A549 (cell line): ENCODE measurements at regions of chr3 and their contacts with region 1.

Region 1: DNA sequence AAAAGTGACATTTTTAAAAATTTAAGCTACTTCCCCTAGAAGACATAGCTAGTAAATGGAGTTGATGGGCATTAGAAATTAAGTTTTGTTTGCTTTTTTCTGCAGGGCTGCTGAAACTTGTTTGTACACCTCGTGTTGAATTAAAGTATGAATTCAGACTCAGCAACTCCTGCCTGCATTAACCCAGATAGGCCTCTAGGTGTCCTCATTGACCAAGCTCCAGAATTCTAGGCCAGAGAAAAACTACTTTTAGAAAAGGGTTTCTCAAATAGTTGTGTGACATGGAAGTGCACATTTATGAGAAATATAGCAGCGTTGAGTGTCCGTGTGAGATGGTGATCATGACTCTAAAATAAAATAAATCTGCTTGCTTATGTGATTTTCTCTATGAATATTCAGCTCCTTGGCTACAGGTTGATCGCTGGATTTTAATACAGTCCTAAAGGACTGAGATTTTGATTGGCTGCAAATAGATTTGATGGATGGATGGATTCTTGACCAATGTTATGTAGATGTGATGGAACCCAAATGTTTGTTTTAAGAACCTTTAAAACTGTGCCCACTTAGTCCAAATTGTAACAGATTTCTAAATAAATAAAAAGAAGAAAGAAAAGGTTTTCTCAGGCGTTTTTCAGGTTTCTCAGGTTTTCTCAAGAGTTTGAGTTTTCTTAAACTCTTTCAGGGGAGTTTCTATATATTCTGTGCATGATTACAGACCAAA is 39.4 kb upstream of the LMOD3 start:
- DNase-seq: peak; percentile 41 to 42
- ATAC-seq: peak in 1 of 2 experiments; percentile 60; a peak in 4 of 6 replicates
- H3K4me3 ChIP-seq: no peak overlapping the region
- H3K27ac ChIP-seq: no peak overlapping the region
- H3K4me1 ChIP-seq: no peaks in the 10 kb centered on the region
- CTCF ChIP-seq: peak; percentile 88
- EP300 ChIP-seq: no peak
- POLR2A ChIP-seq: no peak
- RAD21 ChIP-seq: peak; percentile 94 to 96

Region 2: DNA sequence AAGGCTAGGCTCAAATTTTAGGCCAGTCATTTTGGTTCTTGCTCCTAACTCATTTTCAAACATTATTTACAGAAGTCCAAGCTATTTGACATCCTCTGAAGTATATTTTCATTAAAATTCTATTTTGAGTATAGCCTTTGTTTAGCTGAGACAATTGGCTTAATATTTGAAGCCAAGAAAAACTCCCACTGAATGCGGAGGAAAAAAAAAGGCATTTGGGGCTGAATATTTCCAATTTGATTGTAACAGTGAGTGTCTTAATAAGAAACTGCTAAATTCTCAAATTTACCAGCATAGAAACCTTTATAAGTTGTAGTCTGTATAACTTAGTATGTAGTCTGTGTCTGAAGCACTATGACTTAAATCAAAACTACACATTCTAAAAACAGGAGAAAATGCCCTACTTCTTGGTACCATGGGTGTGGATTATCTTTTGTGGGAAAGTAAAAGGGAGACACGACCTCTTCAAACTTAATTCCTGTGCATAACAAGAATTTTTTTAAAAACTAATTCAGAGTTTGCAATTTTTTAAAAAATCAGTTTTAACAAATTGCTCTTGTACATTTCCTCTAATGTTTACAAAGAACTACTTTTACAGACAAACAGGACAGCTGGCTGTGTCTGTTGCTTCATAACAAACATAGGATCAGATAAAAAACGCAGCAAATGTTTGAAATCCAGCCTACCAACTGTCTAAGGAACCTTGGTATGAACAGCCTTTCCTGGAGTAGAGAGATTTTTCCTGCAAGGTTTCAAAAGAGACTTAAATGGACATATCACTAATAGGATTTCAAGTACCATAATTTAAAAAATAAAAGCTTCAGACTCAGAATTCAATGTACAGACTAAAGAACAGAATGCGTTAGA is 13.4 kb after region 1 on chr3:
- CTCF ChIA-PET with region 1: interaction called, 32 read pairs
- POLR2A ChIA-PET with region 1: no interaction called
- DNase-seq: no peak
- ATAC-seq: no peak
- H3K4me3 ChIP-seq: no peak overlapping the region
- H3K27ac ChIP-seq: no peak overlapping the region
- H3K4me1 ChIP-seq: peaks cover 20% of the 10 kb centered on the region
- CTCF ChIP-seq: no peak
- EP300 ChIP-seq: no peak
- POLR2A ChIP-seq: no peak
- RAD21 ChIP-seq: no peak

Region 3: GRCh38 chr3:69306239-69307185 is 144.8 kb after region 1 on chr3:
- CTCF ChIA-PET with region 1: interaction called, 283 read pairs
- POLR2A ChIA-PET with region 1: no interaction called
- DNase-seq: peak; percentile 27 to 77
- ATAC-seq: peak; percentile 94 to 98
- H3K4me3 ChIP-seq: no peak overlapping the region
- H3K27ac ChIP-seq: no peak overlapping the region
- H3K4me1 ChIP-seq: no peaks in the 10 kb centered on the region
- CTCF ChIP-seq: peak; percentile 79
- EP300 ChIP-seq: no peak
- POLR2A ChIP-seq: no peak
- RAD21 ChIP-seq: peak; percentile 89 to 95

Region 4: DNA sequence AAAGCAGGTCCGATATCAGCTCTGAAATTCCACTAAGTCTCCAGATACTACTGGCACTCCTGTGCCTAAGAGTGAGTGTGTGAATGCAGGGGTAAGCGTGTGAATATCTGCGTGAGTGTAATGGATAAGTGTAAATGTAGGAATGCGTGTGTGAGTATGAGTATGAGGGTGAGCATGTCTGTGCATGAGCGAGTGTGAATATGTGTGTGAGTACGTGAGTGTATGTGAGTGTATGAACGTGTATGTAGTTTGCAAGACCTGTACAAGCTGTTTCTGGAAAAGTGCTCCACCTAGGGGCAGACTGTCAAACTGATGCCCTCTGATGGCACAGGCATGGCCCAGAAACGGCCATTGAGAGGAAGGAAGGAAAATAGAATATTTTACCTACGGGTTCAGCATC is 248.5 kb after region 1 on chr3:
- CTCF ChIA-PET with region 1: interaction called, 12 read pairs
- POLR2A ChIA-PET with region 1: no interaction called
- DNase-seq: peak; percentile 21 to 60
- ATAC-seq: peak; percentile 94 to 96
- H3K4me3 ChIP-seq: no peak overlapping the region
- H3K27ac ChIP-seq: no peak overlapping the region
- H3K4me1 ChIP-seq: no peaks in the 10 kb centered on the region
- CTCF ChIP-seq: peak; percentile 51
- EP300 ChIP-seq: no peak
- POLR2A ChIP-seq: no peak
- RAD21 ChIP-seq: peak; percentile 44 to 47; a peak in 4 of 5 replicates

Region 5: GRCh38 chr3:69671082-69671952 is 509.6 kb after region 1 on chr3:
- CTCF ChIA-PET with region 1: interaction called, 11 read pairs
- POLR2A ChIA-PET with region 1: no interaction called
- DNase-seq: peak; percentile 42 to 60
- ATAC-seq: peak; percentile 53 to 67; a peak in 3 of 6 replicates
- H3K4me3 ChIP-seq: no peak overlapping the region
- H3K27ac ChIP-seq: no peak overlapping the region
- H3K4me1 ChIP-seq: no peaks in the 10 kb centered on the region; the same call in 2 of the 3 replicates
- CTCF ChIP-seq: peak; percentile 84
- EP300 ChIP-seq: no peak
- POLR2A ChIP-seq: no peak
- RAD21 ChIP-seq: peak; percentile 88 to 89